Ascending aorta (tissue), 2 donors: ENCODE measurements at regions of chr4 and their contacts with region 1.

Region 1: DNA sequence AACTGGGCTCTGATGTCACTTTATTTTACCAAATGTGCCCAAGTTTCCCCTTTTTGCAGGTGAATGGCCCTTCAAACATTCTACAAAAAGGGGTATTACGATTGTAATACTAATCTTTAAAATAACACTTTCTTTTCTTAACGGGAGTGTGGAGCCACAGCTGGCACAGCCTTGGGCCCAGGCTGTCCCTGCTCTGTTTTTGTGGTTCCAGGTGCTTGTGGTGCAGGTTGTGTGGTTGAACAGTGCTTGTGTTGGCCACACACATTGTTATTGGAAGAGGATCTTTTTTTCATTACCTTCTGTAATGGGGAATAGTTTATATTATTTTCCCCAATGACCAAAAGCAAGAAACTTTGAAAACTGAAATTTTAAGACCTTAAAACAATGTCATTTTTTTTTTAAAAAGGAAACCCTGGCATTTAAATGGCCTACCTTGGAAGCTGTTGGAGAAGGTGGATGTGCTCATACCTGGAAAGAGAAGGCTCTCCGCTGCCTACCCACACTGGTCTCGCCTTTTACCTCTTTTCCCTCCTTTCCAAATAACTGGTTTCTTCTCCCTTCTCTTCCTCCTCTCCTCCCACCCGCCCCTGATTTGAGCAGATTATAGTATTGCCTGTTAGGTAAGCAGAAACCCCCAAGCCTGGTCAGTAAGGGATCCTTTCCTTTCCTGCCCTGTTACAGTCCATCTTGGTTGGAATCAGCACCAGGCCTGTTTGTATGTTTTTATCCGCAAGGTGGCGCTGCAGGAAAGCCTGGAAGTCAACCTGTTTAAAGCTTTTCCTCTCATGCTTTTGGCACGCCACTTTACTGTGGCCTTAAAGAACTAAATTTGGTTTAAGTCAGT is 28.6 kb downstream of the HADH start:
- DNase-seq: peak in 1 of 2 donors; percentile 91
- H3K4me3 ChIP-seq: no peak overlapping the region
- H3K27ac ChIP-seq: no peak overlapping the region
- H3K4me1 ChIP-seq: no peaks in the 10 kb centered on the region
- H3K27me3 ChIP-seq: no peaks in the 10 kb centered on the region
- CTCF ChIP-seq: peak; percentile 65 to 87 (median 80)

Region 2: DNA sequence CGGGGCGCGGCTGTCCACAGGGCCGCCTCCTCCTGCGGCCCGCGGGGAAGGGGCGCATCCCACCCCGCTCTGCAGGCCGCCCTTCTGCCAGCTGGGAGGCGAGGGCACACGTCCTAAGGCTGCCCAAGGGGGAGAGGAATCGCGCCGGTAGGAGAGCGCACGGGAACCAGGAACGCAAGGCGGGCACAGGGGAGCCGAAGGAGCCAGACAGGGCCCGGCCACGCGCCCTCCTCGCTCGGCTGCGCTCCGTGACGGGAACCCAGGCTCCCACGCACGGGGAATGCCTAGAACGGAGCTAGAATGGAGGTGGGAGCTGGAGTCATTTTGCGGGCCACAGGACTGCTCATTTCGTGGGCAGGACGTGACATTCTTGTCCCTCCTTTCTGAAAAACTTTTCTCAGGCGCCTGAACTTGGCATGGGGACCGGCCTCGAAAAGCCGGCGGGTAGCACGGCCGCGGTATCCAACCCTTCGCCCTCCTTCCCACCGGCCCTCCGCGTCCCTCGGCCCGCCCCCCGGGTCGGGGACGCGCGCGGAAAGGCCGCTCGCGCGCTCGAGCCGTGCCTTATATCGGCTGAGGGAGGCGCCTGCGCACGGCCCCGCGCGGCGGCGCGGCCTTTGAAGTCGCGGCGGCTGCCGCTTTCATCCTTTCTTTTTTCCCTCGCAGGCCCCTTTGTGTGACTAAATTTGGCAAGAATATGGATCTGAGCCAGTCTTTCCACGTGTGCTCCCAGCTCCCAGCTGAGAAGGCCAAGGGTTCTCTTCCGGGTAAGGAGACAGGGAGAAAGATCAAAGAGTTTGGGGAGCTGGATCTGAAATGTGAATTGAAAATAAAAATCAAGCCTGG is 154.7 kb after region 1 on chr4:
- intact Hi-C with region 1: loop called (anchors 10 kb)
- DNase-seq: peak in 1 of 2 donors; percentile 70
- H3K4me3 ChIP-seq: peak overlapping the region; percentile 49 to 68
- H3K27ac ChIP-seq: peak overlapping the region in 1 of 2 donors; percentile 27
- H3K4me1 ChIP-seq: peaks cover 7 to 10% of the 10 kb centered on the region in 2 donors
- H3K27me3 ChIP-seq: peaks cover 14% of the 10 kb centered on the region
- CTCF ChIP-seq: no peak